BJ (cell line): ENCODE measurements at regions of chr2 and their contacts with region 1.

Region 1: GRCh38 chr2:72211777-72212485 is 64.3 kb upstream of the CYP26B1 start:
- DNase-seq: no peak
- H3K4me3 ChIP-seq: no peak overlapping the region
- H3K27me3 ChIP-seq: no peaks in the 10 kb centered on the region
- CTCF ChIP-seq: no peak

Region 2: DNA sequence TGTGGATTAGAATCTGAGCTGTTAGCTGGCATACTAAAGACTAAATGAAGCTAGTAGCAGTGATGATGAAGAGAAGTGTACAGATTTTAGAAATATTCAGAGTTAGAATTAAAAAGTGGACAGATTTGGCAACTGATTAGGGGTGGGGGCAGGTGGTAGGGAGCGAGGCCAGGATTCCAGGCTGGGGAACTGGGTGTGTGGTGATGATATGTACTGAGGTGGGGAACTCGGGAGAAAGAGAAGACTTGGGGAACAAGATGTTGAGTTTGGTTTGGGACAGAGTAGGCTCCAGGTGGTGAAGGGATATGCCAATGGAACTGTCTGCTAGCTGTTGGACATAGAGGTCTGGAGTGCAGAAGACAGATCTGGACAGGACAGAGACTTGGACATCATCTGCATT is 55.1 kb before region 1 on chr2:
- CTCF ChIA-PET with region 1: no interaction called
- POLR2A ChIA-PET with region 1: no interaction called
- DNase-seq: no peak
- H3K4me3 ChIP-seq: no peak overlapping the region
- H3K27me3 ChIP-seq: peaks cover 10% of the 10 kb centered on the region
- CTCF ChIP-seq: no peak

Region 3: DNA sequence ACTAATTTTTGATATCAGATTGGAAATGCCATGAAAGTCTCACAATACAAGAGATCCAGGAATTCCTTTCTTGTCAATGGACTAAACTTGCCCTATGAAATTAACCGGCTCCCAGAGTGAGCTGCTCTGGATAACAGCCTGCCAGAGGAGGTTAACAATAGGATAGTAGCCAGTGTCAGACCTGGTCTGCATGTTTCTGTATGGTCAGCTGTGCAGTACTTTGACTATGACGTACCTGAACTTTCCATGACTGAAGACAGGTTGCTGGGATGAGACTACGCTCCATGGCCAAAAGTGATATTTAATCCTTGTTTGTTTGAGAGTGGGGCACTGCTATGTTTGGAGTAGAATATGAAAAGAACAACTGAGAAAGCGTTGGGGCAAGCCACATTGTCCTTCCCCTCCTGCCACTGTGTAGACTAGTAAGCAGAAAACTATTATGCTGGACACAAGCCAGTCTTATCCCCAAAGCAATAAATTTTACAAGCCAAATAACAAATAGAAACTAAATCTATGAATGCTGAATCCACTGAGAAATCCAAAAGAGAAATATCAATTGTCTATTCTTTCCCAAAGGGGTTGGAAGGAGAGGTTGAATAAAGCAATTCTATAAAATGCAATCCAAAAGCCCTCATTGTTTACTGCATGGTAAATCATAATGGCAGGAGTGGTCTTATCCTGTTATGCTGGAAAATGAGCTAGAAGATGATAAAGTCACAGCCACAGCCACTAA is 51.3 kb after region 1 on chr2:
- CTCF ChIA-PET with region 1: no interaction called
- POLR2A ChIA-PET with region 1: no interaction called
- DNase-seq: no peak
- H3K4me3 ChIP-seq: no peak overlapping the region
- H3K27me3 ChIP-seq: no peaks in the 10 kb centered on the region
- CTCF ChIP-seq: no peak

Region 4: GRCh38 chr2:72442270-72442669 is 230.3 kb after region 1 on chr2:
- CTCF ChIA-PET with region 1: no interaction called
- POLR2A ChIA-PET with region 1: interaction called, 12 read pairs
- DNase-seq: no peak
- H3K4me3 ChIP-seq: no peak overlapping the region
- H3K27me3 ChIP-seq: no peaks in the 10 kb centered on the region
- CTCF ChIP-seq: no peak